CD4-positive, alpha-beta T cell (primary cell): ENCODE measurements at regions of chr5 and their contacts with region 1.

Region 1: GRCh38 chr5:180810210-180810958 is 7.8 kb upstream of the MGAT1 start:
- DNase-seq: peak; percentile 94 to 98 (median 97)
- ATAC-seq: peak; percentile 76
- H3K4me3 ChIP-seq: peak overlapping the region; percentile 80
- H3K4me3 Mint-ChIP-seq: peak overlapping the region; percentile 91
- H3K27ac ChIP-seq: peak overlapping the region; percentile 95 to 98
- H3K27ac Mint-ChIP-seq: peak overlapping the region; percentile 94
- H3K4me1 ChIP-seq: peaks cover 58% of the 10 kb centered on the region
- H3K4me1 Mint-ChIP-seq: peaks cover 87% of the 10 kb centered on the region
- H3K27me3 ChIP-seq: no peaks in the 10 kb centered on the region
- H3K27me3 Mint-ChIP-seq: no peaks in the 10 kb centered on the region
- CTCF ChIP-seq: no peak

Region 2: GRCh38 chr5:180494060-180494509 is 316.3 kb before region 1 on chr5 and contains the start of gene CNOT6:
- CTCF ChIA-PET with region 1: no interaction called
- POLR2A ChIA-PET with region 1: interaction called, 7 read pairs
- intact Hi-C with region 1: loop called in 1 of 2 experiments (anchors 10 kb)
- DNase-seq: peak; percentile 89 to 99 (median 94)
- ATAC-seq: peak; percentile 88
- H3K4me3 ChIP-seq: peak within 1 kb of the TSS; percentile 73
- H3K4me3 Mint-ChIP-seq: peak within 1 kb of the TSS; percentile 100
- H3K27ac ChIP-seq: peak within 1 kb of the TSS; percentile 60 to 83
- H3K27ac Mint-ChIP-seq: peak within 1 kb of the TSS; percentile 98
- H3K4me1 ChIP-seq: peaks cover 34% of the 10 kb centered on the region
- H3K4me1 Mint-ChIP-seq: peaks cover 40% of the 10 kb centered on the region
- H3K27me3 ChIP-seq: no peaks in the 10 kb centered on the region
- H3K27me3 Mint-ChIP-seq: no peaks in the 10 kb centered on the region
- CTCF ChIP-seq: no peak
- total RNA-seq, gene CNOT6: 12.5 to 13.8 TPM

Region 3: DNA sequence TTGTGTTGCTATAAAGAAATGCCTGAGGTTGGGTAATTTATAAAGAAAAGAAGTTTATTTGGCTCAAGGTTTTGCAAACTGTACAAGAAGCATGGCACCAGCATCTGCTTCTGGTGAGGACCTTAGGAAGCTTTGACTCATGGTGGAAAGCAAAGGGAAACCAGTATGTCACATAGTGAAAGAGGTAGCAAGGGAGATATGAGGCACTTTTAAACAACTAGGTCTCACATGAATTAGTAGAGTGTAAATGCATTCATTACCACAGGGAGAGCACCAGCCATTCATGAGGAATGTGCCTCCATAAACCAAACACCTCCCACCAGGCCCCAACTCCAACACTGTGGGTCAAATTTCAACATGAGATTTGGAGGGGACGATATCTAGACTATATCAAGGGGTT is 111.3 kb before region 1 on chr5:
- CTCF ChIA-PET with region 1: no interaction called
- POLR2A ChIA-PET with region 1: no interaction called
- intact Hi-C with region 1: no loop called
- DNase-seq: no peak
- ATAC-seq: no peak
- H3K4me3 ChIP-seq: no peak overlapping the region
- H3K4me3 Mint-ChIP-seq: no peak overlapping the region
- H3K27ac ChIP-seq: no peak overlapping the region
- H3K27ac Mint-ChIP-seq: no peak overlapping the region
- H3K4me1 ChIP-seq: no peaks in the 10 kb centered on the region
- H3K4me1 Mint-ChIP-seq: no peaks in the 10 kb centered on the region
- H3K27me3 ChIP-seq: no peaks in the 10 kb centered on the region
- H3K27me3 Mint-ChIP-seq: no peaks in the 10 kb centered on the region
- CTCF ChIP-seq: no peak

Region 4: DNA sequence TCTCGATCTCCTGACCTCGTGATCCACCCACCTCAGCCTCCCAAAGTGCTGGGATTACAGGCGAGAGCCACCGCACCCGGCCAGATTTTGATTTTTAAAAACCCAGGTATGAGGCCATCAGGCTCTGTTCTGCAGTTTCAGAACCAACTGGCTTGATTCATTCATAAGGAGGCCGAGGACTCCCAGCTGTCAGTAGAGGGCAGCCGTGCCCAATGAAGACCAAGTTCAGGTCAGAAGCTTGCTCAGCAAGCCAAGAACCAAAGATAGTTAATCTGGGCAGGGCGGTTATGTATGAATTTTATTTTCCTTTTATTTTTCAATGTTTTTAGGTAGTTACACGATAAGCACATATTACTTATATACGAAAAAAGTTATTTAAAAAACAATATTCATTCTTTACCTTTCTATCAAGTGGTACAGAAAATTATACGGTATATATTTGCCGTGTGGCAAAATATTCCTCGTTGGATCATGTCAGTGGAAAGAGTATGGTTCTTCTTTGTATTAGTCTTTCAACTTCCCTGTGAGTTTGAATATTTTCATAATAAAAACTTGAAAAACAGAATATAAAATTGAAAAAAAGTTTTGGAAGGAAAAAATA is 25.8 kb before region 1 on chr5:
- CTCF ChIA-PET with region 1: interaction called, 3 read pairs
- POLR2A ChIA-PET with region 1: interaction called, 6 read pairs
- intact Hi-C with region 1: loop called in 1 of 2 experiments (anchors 1 kb)
- DNase-seq: peak; percentile 59 to 86 (median 74)
- ATAC-seq: peak; percentile 90
- H3K4me3 ChIP-seq: no peak overlapping the region
- H3K4me3 Mint-ChIP-seq: no peak overlapping the region
- H3K27ac ChIP-seq: no peak overlapping the region
- H3K27ac Mint-ChIP-seq: peak overlapping the region; percentile 85
- H3K4me1 ChIP-seq: peaks cover 31% of the 10 kb centered on the region
- H3K4me1 Mint-ChIP-seq: peaks cover 45% of the 10 kb centered on the region
- H3K27me3 ChIP-seq: no peaks in the 10 kb centered on the region
- H3K27me3 Mint-ChIP-seq: no peaks in the 10 kb centered on the region
- CTCF ChIP-seq: peak; percentile 69

Region 5: GRCh38 chr5:180825768-180826525 is 15.6 kb after region 1 on chr5:
- CTCF ChIA-PET with region 1: interaction called, 34 read pairs
- POLR2A ChIA-PET with region 1: interaction called, 612 read pairs
- intact Hi-C with region 1: loop called in 1 of 2 experiments (anchors 1 kb)
- DNase-seq: no peak
- ATAC-seq: no peak
- H3K4me3 ChIP-seq: no peak overlapping the region
- H3K4me3 Mint-ChIP-seq: no peak overlapping the region
- H3K27ac ChIP-seq: no peak overlapping the region
- H3K27ac Mint-ChIP-seq: peak overlapping the region; percentile 69
- H3K4me1 ChIP-seq: peaks cover 25% of the 10 kb centered on the region
- H3K4me1 Mint-ChIP-seq: peaks cover 53% of the 10 kb centered on the region
- H3K27me3 ChIP-seq: no peaks in the 10 kb centered on the region
- H3K27me3 Mint-ChIP-seq: no peaks in the 10 kb centered on the region
- CTCF ChIP-seq: no peak

Region 6: GRCh38 chr5:180860887-180861822 is 50.8 kb after region 1 on chr5 and contains the start of gene ZFP62:
- CTCF ChIA-PET with region 1: interaction called, 7 read pairs
- POLR2A ChIA-PET with region 1: interaction called, 50 read pairs
- intact Hi-C with region 1: loop called (anchors 1 to 2 kb)
- DNase-seq: peak; percentile 78 to 94 (median 85)
- ATAC-seq: peak; percentile 73
- H3K4me3 ChIP-seq: peak within 1 kb of the TSS; percentile 89
- H3K4me3 Mint-ChIP-seq: peak within 1 kb of the TSS; percentile 95
- H3K27ac ChIP-seq: peak within 1 kb of the TSS; percentile 85 to 88
- H3K27ac Mint-ChIP-seq: peak within 1 kb of the TSS; percentile 95
- H3K4me1 ChIP-seq: peaks cover 10% of the 10 kb centered on the region
- H3K4me1 Mint-ChIP-seq: peaks cover 27% of the 10 kb centered on the region
- H3K27me3 ChIP-seq: no peaks in the 10 kb centered on the region
- H3K27me3 Mint-ChIP-seq: peaks cover 5% of the 10 kb centered on the region
- CTCF ChIP-seq: peak; percentile 50
- total RNA-seq, gene ZFP62: 22.6 to 24.9 TPM

Region 7: GRCh38 chr5:181243512-181244343 is 433.3 kb after region 1 on chr5 and contains the start of gene RACK1:
- CTCF ChIA-PET with region 1: no interaction called
- POLR2A ChIA-PET with region 1: no interaction called
- intact Hi-C with region 1: loop called in 1 of 2 experiments (anchors 10 kb)
- DNase-seq: peak; percentile 84 to 95 (median 88)
- ATAC-seq: peak; percentile 75
- H3K4me3 ChIP-seq: peak within 1 kb of the TSS; percentile 94
- H3K4me3 Mint-ChIP-seq: peak within 1 kb of the TSS; percentile 95
- H3K27ac ChIP-seq: peak within 1 kb of the TSS; percentile 81 to 90
- H3K27ac Mint-ChIP-seq: peak within 1 kb of the TSS; percentile 96
- H3K4me1 ChIP-seq: peaks cover 87% of the 10 kb centered on the region
- H3K4me1 Mint-ChIP-seq: peaks cover 76% of the 10 kb centered on the region
- H3K27me3 ChIP-seq: no peaks in the 10 kb centered on the region
- H3K27me3 Mint-ChIP-seq: no peaks in the 10 kb centered on the region
- CTCF ChIP-seq: no peak
- total RNA-seq, gene RACK1: 2,499 to 2,682 TPM